Panc1 (cell line): ENCODE measurements at regions of chr11 and their contacts with region 1.

Region 1: GRCh38 chr11:35030716-35031213 is 108.2 kb upstream of the CD44 start:
- DNase-seq: peak; percentile 93
- ATAC-seq: peak; percentile 94
- H3K4me3 ChIP-seq: peak overlapping the region in 1 of 2 experiments; percentile 26; a peak in 1 of 4 replicates
- H3K27ac ChIP-seq: peak overlapping the region; percentile 92
- H3K4me1 ChIP-seq: peaks cover 36% of the 10 kb centered on the region
- H3K27me3 ChIP-seq: no peaks in the 10 kb centered on the region
- CTCF ChIP-seq: no peak

Region 2: GRCh38 chr11:34926101-34926830 is 104.5 kb before region 1 on chr11:
- CTCF ChIA-PET with region 1: no interaction called
- POLR2A ChIA-PET with region 1: no interaction called
- in situ Hi-C with region 1: no loop called
- intact Hi-C with region 1: no loop called
- DNase-seq: peak; percentile 47
- ATAC-seq: peak; percentile 83
- H3K4me3 ChIP-seq: no peak overlapping the region
- H3K27ac ChIP-seq: peak overlapping the region; percentile 90
- H3K4me1 ChIP-seq: peaks cover 75% of the 10 kb centered on the region
- H3K27me3 ChIP-seq: no peaks in the 10 kb centered on the region
- CTCF ChIP-seq: peak; percentile 74; the same call in 1 of the 2 replicates

Region 3: DNA sequence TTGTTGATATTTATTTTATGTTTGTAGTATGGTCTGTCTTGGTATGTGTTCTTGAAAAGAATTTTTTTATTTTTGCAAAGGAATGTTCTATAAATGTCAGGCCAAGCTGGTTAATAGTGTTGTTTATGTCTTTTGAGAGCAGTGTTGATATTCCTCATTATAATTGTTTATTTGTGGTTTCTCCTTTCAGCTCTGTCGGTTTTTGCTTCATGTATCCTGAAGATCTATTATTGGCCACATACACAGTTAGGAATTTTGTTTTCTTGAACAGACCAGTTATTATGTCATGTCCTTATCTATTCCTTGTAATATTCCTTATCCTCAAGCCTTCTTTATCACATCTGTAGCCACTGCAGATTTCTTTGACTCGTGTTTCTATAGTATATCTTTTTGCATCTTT is 57.9 kb before region 1 on chr11:
- CTCF ChIA-PET with region 1: no interaction called
- POLR2A ChIA-PET with region 1: no interaction called
- in situ Hi-C with region 1: no loop called
- intact Hi-C with region 1: no loop called
- DNase-seq: no peak
- ATAC-seq: peak; percentile 65
- H3K4me3 ChIP-seq: no peak overlapping the region
- H3K27ac ChIP-seq: peak overlapping the region; percentile 100
- H3K4me1 ChIP-seq: peaks cover 25% of the 10 kb centered on the region
- H3K27me3 ChIP-seq: no peaks in the 10 kb centered on the region
- CTCF ChIP-seq: no peak

Region 4: DNA sequence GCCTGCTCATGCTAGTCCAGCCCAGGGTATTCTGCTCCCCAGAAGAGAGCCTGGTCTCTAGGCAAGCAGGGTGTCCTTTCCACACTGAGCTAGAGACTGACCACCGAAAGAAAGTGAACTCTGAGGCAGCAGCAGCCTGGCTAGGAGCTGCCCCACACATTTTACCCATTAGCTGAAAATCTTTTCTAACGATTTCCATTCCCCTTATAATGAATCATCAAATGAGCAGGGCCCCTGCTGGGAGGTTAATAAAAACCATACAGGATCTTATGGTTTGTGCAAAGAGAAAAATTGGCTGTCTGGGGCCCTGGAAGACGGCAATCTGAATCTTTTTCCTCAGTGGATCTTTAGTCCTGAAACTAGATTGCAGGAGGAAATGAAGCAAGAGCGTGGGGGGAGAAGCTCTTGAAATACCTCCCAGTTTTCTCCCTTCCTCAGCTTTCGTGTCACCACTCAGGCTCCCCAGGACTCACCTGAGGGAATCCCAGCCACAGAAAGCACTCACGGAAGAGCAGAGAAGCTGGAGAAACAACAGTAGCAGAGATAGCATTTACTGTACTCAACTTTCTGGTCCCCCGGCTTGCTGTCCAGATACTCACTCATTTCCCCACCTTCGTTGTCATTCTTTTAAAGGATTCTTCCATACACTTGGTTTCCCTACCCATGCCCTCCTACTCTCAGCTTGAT is 33.5 kb after region 1 on chr11:
- CTCF ChIA-PET with region 1: interaction called, 4 read pairs
- POLR2A ChIA-PET with region 1: interaction called, 23 read pairs
- in situ Hi-C with region 1: no loop called
- intact Hi-C with region 1: no loop called
- DNase-seq: no peak
- ATAC-seq: peak; percentile 57
- H3K4me3 ChIP-seq: no peak overlapping the region
- H3K27ac ChIP-seq: peak overlapping the region; percentile 84
- H3K4me1 ChIP-seq: peaks cover 14% of the 10 kb centered on the region
- H3K27me3 ChIP-seq: no peaks in the 10 kb centered on the region
- CTCF ChIP-seq: no peak